WTC11 (cell line): ENCODE measurements at regions of chr6 and their contacts with region 1.

Region 1: DNA sequence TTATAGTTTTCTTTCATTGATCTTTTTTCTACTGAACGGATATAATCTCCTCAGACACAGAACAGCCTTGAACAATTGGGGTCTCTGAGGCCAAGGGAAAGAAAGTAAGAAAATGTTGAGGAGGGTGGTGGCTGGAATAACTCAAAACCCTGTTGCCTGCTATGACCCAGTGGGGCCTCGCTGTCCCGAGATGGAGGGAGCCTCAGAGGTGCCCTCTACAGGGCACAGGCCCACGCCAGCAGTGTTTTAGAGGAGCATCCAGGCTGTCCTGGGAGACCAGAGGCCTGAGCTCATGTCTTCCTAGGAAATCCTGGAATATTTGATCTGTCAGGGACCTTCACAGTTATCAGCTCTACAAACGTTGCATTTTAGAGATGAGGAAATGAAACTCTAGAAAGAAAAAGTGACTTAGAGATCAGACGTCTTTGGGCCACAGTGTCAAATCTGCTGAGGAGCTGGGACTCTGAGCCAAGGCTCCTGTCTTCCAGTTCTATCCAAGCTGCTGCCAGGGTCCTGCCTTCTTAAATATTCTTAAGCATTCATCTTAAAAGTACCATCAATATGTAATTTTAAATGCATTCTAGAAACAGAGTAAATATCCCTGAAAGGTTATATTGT is 26.3 kb downstream of the ALDH5A1 start:
- DNase-seq: peak; percentile 70
- ATAC-seq: peak; percentile 99
- H3K4me3 Mint-ChIP-seq: no peak overlapping the region
- H3K27ac Mint-ChIP-seq: no peak overlapping the region
- H3K4me1 Mint-ChIP-seq: no peaks in the 10 kb centered on the region
- H3K27me3 Mint-ChIP-seq: no peaks in the 10 kb centered on the region
- CTCF ChIP-seq: no peak

Region 2: GRCh38 chr6:24340998-24341938 is 179.8 kb before region 1 on chr6:
- CTCF ChIA-PET with region 1: no interaction called
- POLR2A ChIA-PET with region 1: no interaction called
- DNase-seq: no peak
- ATAC-seq: no peak
- H3K4me3 Mint-ChIP-seq: no peak overlapping the region
- H3K27ac Mint-ChIP-seq: no peak overlapping the region
- H3K4me1 Mint-ChIP-seq: no peaks in the 10 kb centered on the region
- H3K27me3 Mint-ChIP-seq: peaks cover 6% of the 10 kb centered on the region; the same call in 1 of the 2 replicates
- CTCF ChIP-seq: no peak

Region 3: DNA sequence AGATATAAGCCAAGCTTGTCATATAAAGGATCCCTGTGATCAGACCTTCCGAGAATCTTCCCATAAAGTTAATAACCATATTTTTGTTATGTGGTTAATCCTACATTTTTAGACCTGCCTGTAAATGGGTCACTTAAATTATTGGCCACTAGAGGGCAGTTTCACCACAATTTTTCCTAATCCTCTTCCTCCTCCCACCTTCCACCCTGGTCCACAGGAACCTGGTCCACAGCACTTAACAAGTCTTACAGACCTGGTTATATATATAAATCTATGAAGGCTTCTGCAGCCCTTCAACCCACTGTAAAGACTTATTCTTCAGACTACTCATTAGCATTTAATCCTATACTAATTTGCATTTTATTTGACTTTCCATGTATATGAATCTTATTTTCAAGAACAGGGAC is 90.0 kb before region 1 on chr6:
- CTCF ChIA-PET with region 1: interaction called, 10 read pairs
- POLR2A ChIA-PET with region 1: no interaction called
- DNase-seq: no peak
- ATAC-seq: peak; percentile 40; the same call in 1 of the 2 replicates
- H3K4me3 Mint-ChIP-seq: no peak overlapping the region
- H3K27ac Mint-ChIP-seq: no peak overlapping the region
- H3K4me1 Mint-ChIP-seq: no peaks in the 10 kb centered on the region
- H3K27me3 Mint-ChIP-seq: no peaks in the 10 kb centered on the region
- CTCF ChIP-seq: 0 out of 2 replicates have a peak, but pooled peaks have one; percentile 42

Region 4: DNA sequence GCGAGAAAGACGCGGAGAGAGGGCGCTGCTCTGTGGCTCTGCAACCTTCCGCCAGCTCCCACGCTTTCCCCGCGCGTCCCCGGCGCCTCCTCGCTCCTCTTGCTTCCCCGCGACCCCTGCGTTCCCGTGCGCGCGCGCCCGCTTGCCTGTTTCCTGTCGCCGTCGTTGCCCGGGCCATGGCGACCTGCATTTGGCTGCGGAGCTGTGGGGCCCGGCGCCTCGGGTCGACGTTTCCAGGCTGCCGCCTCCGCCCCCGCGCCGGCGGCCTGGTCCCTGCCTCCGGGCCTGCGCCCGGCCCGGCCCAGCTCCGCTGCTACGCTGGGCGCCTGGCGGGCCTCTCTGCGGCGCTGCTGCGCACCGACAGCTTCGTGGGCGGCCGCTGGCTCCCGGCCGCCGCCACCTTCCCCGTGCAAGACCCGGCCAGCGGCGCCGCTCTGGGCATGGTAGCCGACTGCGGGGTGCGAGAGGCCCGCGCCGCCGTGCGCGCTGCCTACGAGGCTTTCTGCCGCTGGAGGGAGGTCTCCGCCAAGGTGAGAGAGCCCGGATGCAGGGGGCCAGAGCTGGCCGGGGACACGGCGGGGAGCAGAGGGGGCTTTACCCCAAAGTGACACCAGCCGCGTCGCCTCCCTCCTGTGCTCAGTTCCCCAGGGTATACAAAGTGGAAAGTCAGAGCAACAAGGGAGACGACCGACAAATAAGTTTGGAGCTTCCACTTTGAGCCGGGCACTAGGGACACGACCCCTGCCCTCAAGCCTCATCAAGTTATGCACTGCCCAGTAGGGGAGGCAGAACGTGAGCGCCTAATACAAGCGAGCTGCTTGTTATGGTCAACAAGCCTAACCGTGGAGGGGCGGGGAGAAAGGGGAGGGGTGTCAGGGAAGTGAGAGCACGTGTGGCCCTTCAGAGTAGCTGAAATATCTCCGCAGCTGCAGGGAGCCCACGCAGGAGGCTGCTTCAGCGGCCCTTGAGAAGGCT is 25.9 kb before region 1 on chr6 and contains the start of gene ALDH5A1:
- CTCF ChIA-PET with region 1: interaction called, 58 read pairs
- POLR2A ChIA-PET with region 1: interaction called, 4 read pairs
- DNase-seq: peak; percentile 78
- ATAC-seq: peak; percentile 72
- H3K4me3 Mint-ChIP-seq: peak within 1 kb of the TSS; percentile 78
- H3K27ac Mint-ChIP-seq: no peak within 1 kb of the TSS
- H3K4me1 Mint-ChIP-seq: peaks cover 31% of the 10 kb centered on the region
- H3K27me3 Mint-ChIP-seq: peaks cover 37% of the 10 kb centered on the region
- CTCF ChIP-seq: no peak
- total RNA-seq, gene ALDH5A1: 5.1 to 6.7 TPM (median 5.5 TPM) in 3 replicates

Region 5: GRCh38 chr6:24501914-24502313 is 19.1 kb before region 1 on chr6:
- CTCF ChIA-PET with region 1: interaction called, 58 read pairs
- POLR2A ChIA-PET with region 1: interaction called, 4 read pairs
- DNase-seq: no peak
- ATAC-seq: no peak
- H3K4me3 Mint-ChIP-seq: no peak overlapping the region
- H3K27ac Mint-ChIP-seq: no peak overlapping the region
- H3K4me1 Mint-ChIP-seq: peaks cover 7% of the 10 kb centered on the region
- H3K27me3 Mint-ChIP-seq: peaks cover 8% of the 10 kb centered on the region
- CTCF ChIP-seq: no peak

Region 6: GRCh38 chr6:24537082-24537699 is 16.2 kb after region 1 on chr6:
- CTCF ChIA-PET with region 1: interaction called, 11 read pairs
- POLR2A ChIA-PET with region 1: no interaction called
- DNase-seq: no peak
- ATAC-seq: no peak
- H3K4me3 Mint-ChIP-seq: no peak overlapping the region
- H3K27ac Mint-ChIP-seq: no peak overlapping the region
- H3K4me1 Mint-ChIP-seq: 0 out of 2 replicates have a peak, but pooled peaks cover 6% of the 10 kb centered on the region
- H3K27me3 Mint-ChIP-seq: no peaks in the 10 kb centered on the region
- CTCF ChIP-seq: no peak